ENCODE measurements at regions of chr9 and their contacts with region 1.

Region 1: DNA sequence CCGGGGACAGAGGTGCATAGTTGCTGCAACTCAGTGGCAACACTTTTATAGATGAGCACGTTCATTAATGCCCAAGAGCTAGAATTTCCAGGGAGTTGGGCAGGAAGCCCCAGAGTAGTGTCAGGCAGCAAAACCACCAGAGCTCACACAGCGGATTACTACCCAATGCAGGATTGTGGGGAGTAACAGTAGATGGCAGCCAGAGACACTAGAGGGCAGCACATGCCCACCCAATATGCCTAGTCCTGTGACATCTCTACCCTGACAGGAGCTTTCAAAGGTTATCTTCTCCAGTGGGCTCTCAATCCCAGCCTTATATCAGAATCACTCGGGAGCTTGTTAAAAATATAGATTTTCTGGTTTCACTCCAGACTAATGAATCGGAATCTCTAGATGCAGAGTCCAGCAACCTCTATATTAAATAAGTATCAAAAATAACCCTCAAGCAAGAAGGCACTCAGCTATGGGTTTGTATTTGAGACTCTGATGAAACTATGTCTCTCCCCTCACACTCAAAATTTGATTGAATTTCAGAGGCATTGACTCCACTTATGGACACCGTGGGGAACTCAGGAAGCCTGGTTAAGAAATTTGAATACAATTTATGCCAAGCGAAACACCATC is 58.4 kb upstream of the PHF24 start:
- DNase-seq: peak; percentile 71
- ATAC-seq: peak; percentile 100
- H3K4me3 ChIP-seq: no peak overlapping the region
- H3K27ac ChIP-seq: no peak overlapping the region
- H3K4me1 ChIP-seq: no peaks in the 10 kb centered on the region
- H3K27me3 ChIP-seq: peaks cover 25% of the 10 kb centered on the region
- CTCF ChIP-seq: peak; percentile 94
- POLR2A ChIP-seq: no peak
- RAD21 ChIP-seq: peak; percentile 97

Region 2: DNA sequence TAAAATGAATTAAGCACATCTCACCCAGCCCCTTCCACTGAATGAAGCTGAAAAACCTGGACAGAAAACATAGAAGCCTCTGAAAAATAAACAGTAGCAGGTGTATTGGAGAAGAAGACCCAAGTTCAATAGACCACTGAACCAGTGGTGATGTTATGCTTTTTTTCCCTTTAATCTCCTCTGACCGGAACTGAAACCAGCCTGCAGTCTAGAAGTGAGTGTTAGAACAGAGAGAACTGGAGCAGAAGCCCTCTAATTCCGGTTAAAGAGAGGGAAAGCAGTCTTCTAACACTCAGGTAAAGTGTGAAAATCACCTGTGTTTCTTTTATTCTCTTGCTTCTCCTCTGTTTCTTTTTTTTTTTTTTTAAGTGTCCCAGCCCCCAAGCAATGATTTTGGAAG is 106.2 kb before region 1 on chr9:
- CTCF ChIA-PET with region 1: no interaction called
- POLR2A ChIA-PET with region 1: no interaction called
- dilution Hi-C with region 1: no loop called
- in situ Hi-C with region 1: no loop called
- intact Hi-C with region 1: no loop called
- DNase-seq: no peak
- ATAC-seq: no peak
- H3K4me3 ChIP-seq: no peak overlapping the region
- H3K27ac ChIP-seq: no peak overlapping the region
- H3K4me1 ChIP-seq: no peaks in the 10 kb centered on the region
- H3K27me3 ChIP-seq: 0 out of 2 replicates have a peak, but pooled peaks cover 2% of the 10 kb centered on the region
- CTCF ChIP-seq: no peak
- POLR2A ChIP-seq: no peak
- RAD21 ChIP-seq: no peak

Region 3: GRCh38 chr9:34989003-34989945 is 89.6 kb after region 1 on chr9 and contains the start of gene DNAJB5:
- CTCF ChIA-PET with region 1: interaction called, 14 read pairs
- POLR2A ChIA-PET with region 1: no interaction called
- dilution Hi-C with region 1: no loop called
- in situ Hi-C with region 1: no loop called
- intact Hi-C with region 1: loop called (anchors 1 kb)
- DNase-seq: peak; percentile 100
- ATAC-seq: peak; percentile 87
- H3K4me3 ChIP-seq: peak within 1 kb of the TSS; percentile 60
- H3K27ac ChIP-seq: peak within 1 kb of the TSS; percentile 58
- H3K4me1 ChIP-seq: peaks cover 33% of the 10 kb centered on the region
- H3K27me3 ChIP-seq: no peaks in the 10 kb centered on the region
- CTCF ChIP-seq: no peak
- POLR2A ChIP-seq: peak; percentile 91; the same call in 1 of the 2 replicates
- RAD21 ChIP-seq: no peak
- total RNA-seq, gene DNAJB5: 11.7 and 14.9 TPM in 2 replicates

Region 4: DNA sequence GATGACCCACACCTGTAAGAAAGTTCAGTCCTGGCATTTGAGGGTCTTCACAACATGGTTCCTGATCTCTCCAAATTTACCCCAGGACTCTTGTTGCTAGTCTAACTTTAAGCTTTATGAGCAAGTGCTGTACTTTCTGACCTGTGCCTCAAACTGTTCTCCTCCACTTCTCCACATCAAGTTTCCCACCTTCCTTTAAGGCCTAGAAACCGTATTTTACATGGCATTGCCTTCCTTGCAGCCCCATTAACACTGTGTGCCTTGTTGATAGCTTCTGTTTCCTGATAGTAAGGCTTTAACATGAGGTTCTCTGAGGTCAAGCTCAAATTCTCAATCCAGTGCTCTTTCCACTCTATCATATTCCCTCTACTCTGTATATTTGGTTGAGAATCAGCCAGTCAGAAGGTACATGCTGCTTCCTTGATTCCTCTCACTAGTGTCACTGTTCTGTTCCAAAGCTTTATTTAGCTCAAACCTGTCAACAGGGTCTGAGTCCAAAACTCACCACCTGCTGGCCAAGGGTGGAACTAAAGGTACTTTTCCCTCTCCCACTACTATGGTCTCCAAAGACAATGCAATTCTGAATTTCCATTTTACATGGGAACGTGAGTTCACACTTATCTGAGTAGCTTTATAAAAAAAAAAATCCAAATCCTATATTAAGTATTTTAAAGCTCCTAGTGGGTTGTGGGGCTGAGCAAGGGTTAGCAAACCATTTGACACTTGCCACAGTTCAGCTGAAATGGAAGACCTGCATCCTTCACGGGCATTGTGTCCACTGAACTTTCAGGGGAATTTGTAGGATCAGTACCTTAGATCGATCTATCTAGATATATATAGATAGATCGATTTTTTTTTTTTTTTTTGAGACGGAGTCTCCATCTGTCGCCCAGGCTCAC is 151.7 kb after region 1 on chr9:
- CTCF ChIA-PET with region 1: interaction called, 12 read pairs
- POLR2A ChIA-PET with region 1: no interaction called
- dilution Hi-C with region 1: no loop called
- in situ Hi-C with region 1: no loop called
- intact Hi-C with region 1: loop called (anchors 1 kb)
- DNase-seq: peak; percentile 57
- ATAC-seq: peak; percentile 76
- H3K4me3 ChIP-seq: no peak overlapping the region
- H3K27ac ChIP-seq: no peak overlapping the region
- H3K4me1 ChIP-seq: no peaks in the 10 kb centered on the region
- H3K27me3 ChIP-seq: no peaks in the 10 kb centered on the region
- CTCF ChIP-seq: peak; percentile 56
- POLR2A ChIP-seq: no peak
- RAD21 ChIP-seq: peak; percentile 56

Region 5: DNA sequence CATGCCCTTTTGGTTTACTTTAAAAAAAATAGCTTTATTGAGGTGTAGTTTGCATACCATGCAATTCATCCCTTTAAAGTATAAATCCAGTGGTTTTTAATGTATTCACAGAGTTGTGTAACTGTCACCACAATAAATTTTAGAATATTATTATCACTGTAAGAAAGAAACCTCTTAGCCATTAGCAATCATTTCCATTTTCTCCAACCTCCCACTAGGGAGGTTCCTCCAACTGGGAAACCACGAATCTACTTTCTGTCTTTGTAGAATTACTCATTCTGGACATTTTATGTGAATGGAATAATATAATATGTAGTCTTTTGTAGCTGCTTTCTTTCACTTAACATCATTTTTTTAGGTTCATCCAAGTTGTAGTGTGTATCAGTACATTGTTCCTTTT is 305.7 kb after region 1 on chr9:
- CTCF ChIA-PET with region 1: no interaction called
- POLR2A ChIA-PET with region 1: no interaction called
- dilution Hi-C with region 1: no loop called
- in situ Hi-C with region 1: no loop called
- intact Hi-C with region 1: no loop called
- DNase-seq: no peak
- ATAC-seq: no peak
- H3K4me3 ChIP-seq: no peak overlapping the region
- H3K27ac ChIP-seq: no peak overlapping the region
- H3K4me1 ChIP-seq: no peaks in the 10 kb centered on the region
- H3K27me3 ChIP-seq: no peaks in the 10 kb centered on the region
- CTCF ChIP-seq: no peak
- POLR2A ChIP-seq: no peak
- RAD21 ChIP-seq: no peak

Region 6: DNA sequence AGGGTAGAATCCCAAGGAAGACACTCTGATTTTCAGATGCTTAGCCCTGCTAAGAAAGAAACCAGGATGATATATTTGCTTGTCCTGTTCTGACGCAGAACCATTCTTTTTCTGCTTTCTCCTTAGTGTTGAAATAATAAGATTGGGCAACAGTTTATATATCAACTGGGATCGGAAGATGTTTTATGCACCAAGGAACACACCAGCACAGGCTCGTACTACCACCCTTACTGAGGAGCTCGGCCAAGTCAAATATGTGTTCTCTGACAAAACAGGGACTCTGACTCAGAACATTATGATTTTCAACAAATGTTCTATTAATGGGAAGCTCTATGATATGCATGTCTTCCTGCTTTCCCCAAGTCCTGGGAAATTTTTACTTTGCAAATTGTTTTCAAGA is 571.2 kb after region 1 on chr9:
- CTCF ChIA-PET with region 1: no interaction called
- POLR2A ChIA-PET with region 1: no interaction called
- dilution Hi-C with region 1: no loop called
- in situ Hi-C with region 1: loop called (anchors 10 kb)
- intact Hi-C with region 1: no loop called
- DNase-seq: peak; percentile 87
- ATAC-seq: peak; percentile 97
- H3K4me3 ChIP-seq: no peak overlapping the region
- H3K27ac ChIP-seq: peak overlapping the region; percentile 58; the same call in 1 of the 2 replicates
- H3K4me1 ChIP-seq: peaks cover 2% of the 10 kb centered on the region
- H3K27me3 ChIP-seq: peaks cover 7% of the 10 kb centered on the region
- CTCF ChIP-seq: no peak
- POLR2A ChIP-seq: no peak
- RAD21 ChIP-seq: no peak

Measured in IMR-90 (cell line).